ENCODE measurements at regions of chr17 and their contacts with region 1.

Region 1: GRCh38 chr17:64073771-64074703 is 53.6 kb upstream of the ICAM2 start:
- DNase-seq: no peak
- ATAC-seq: peak in 3 of 4 donors; percentile 51 to 65 (median 58)
- H3K4me3 ChIP-seq: peak overlapping the region in 2 of 4 donors; percentile 5 to 10
- H3K27ac ChIP-seq: peak overlapping the region; percentile 35 to 88 (median 64)
- H3K4me1 ChIP-seq: peaks cover 27 to 41% (median 32%) of the 10 kb centered on the region in 3 donors
- H3K27me3 ChIP-seq: no peaks in the 10 kb centered on the region
- CTCF ChIP-seq: no peak

Region 2: GRCh38 chr17:64120127-64120810 is 46.2 kb after region 1 on chr17:
- intact Hi-C with region 1: loop called (anchors 5 to 10 kb)
- DNase-seq: no peak
- ATAC-seq: no peak
- H3K4me3 ChIP-seq: no peak overlapping the region
- H3K27ac ChIP-seq: peak overlapping the region in 2 of 4 donors; percentile 16 to 43
- H3K4me1 ChIP-seq: peaks cover 23 to 84% (median 60%) of the 10 kb centered on the region in 3 donors
- H3K27me3 ChIP-seq: no peaks in the 10 kb centered on the region
- CTCF ChIP-seq: no peak

Measured in pancreas (tissue), 10 donors.